Naive thymus-derived CD4-positive, alpha-beta T cell (primary cell): ENCODE measurements at regions of chr4 and their contacts with region 1.

Region 1: DNA sequence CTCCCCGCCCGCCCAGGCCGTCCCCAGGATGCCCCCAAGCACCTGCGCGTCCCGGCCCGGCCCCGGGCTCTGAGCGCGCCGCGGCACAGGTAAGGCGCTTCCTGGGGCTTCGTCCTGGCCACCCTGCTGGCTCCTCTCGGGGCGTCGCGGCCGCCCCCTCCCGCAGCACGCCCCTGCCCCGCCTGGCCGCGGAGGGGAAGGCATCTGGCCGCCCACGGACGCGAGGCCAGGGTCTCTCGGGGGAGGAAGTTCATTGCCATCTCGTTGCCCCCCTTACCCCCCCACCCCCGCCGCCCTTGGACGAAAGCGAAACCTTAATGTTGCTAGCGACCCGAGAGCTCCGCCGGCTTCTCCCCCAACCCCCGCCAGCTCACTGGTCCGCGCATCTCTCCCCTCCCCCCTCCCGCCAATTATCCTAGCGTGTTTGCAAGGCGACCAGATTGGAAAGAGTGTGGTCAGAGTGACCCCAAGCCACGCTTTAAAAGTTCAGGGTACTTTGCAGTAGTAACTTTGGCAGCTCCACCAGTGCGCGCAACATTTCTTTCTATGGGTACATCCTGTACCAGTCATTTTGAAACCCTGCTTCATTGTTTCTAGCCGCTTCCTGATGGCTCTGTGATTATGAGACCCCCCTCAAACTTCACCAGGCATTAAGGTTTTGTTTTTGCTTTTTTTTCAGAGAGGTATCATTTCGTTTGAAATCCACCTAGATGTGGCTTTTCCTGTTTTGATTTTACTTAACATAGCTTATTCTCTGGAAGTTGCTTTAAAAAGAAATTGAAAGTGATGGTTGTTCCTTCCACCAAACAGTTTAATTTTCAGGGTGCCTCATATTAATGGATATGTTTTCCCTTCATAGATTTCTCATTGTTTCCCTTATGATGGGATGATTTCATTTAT is 626 bp downstream of the TBC1D1 start:
- DNase-seq: peak; percentile 37 to 70 (median 58)
- ATAC-seq: peak; percentile 68
- H3K4me3 ChIP-seq: peak overlapping the region; percentile 51
- H3K4me3 Mint-ChIP-seq: peak overlapping the region; percentile 88 to 100 (median 96)
- H3K27ac ChIP-seq: peak overlapping the region; percentile 69
- H3K27ac Mint-ChIP-seq: peak overlapping the region; percentile 86 to 97 (median 92)
- H3K4me1 ChIP-seq: peaks cover 10 to 25% of the 10 kb centered on the region in 2 donors
- H3K4me1 Mint-ChIP-seq: peaks cover 28 to 66% (median 55%) of the 10 kb centered on the region in 7 donors
- H3K27me3 ChIP-seq: no peaks in the 10 kb centered on the region
- H3K27me3 Mint-ChIP-seq: peaks cover 0 to 5% (median 0%) of the 10 kb centered on the region in 5 donors

Region 2: GRCh38 chr4:37603070-37603468 is 288.4 kb before region 1 on chr4:
- CTCF ChIA-PET with region 1: interaction called, 3 read pairs
- POLR2A ChIA-PET with region 1: interaction called, 3 read pairs
- intact Hi-C with region 1: loop called (anchors 2 kb)
- DNase-seq: peak; percentile 38 to 84 (median 64)
- ATAC-seq: peak; percentile 87
- H3K4me3 ChIP-seq: no peak overlapping the region
- H3K4me3 Mint-ChIP-seq: peak overlapping the region in 2 of 10 donors; percentile 3 to 58
- H3K27ac ChIP-seq: no peak overlapping the region
- H3K27ac Mint-ChIP-seq: peak overlapping the region in 5 of 9 donors; percentile 2 to 70 (median 55)
- H3K4me1 ChIP-seq: peaks cover 0 to 3% of the 10 kb centered on the region in 2 donors
- H3K4me1 Mint-ChIP-seq: peaks cover 6 to 33% (median 11%) of the 10 kb centered on the region in 7 donors
- H3K27me3 ChIP-seq: no peaks in the 10 kb centered on the region
- H3K27me3 Mint-ChIP-seq: no peaks in the 10 kb centered on the region

Region 3: GRCh38 chr4:37873386-37873785 is 18.1 kb before region 1 on chr4:
- CTCF ChIA-PET with region 1: no interaction called
- POLR2A ChIA-PET with region 1: interaction called, 3 read pairs
- intact Hi-C with region 1: loop called (anchors 1 to 2 kb)
- DNase-seq: no peak
- ATAC-seq: peak; percentile 41
- H3K4me3 ChIP-seq: no peak overlapping the region
- H3K4me3 Mint-ChIP-seq: no peak overlapping the region
- H3K27ac ChIP-seq: no peak overlapping the region
- H3K27ac Mint-ChIP-seq: peak overlapping the region in 1 of 9 donors; percentile 22
- H3K4me1 ChIP-seq: peaks cover 0 to 5% of the 10 kb centered on the region in 2 donors
- H3K4me1 Mint-ChIP-seq: peaks cover 0 to 25% (median 21%) of the 10 kb centered on the region in 7 donors
- H3K27me3 ChIP-seq: no peaks in the 10 kb centered on the region
- H3K27me3 Mint-ChIP-seq: no peaks in the 10 kb centered on the region

Region 4: DNA sequence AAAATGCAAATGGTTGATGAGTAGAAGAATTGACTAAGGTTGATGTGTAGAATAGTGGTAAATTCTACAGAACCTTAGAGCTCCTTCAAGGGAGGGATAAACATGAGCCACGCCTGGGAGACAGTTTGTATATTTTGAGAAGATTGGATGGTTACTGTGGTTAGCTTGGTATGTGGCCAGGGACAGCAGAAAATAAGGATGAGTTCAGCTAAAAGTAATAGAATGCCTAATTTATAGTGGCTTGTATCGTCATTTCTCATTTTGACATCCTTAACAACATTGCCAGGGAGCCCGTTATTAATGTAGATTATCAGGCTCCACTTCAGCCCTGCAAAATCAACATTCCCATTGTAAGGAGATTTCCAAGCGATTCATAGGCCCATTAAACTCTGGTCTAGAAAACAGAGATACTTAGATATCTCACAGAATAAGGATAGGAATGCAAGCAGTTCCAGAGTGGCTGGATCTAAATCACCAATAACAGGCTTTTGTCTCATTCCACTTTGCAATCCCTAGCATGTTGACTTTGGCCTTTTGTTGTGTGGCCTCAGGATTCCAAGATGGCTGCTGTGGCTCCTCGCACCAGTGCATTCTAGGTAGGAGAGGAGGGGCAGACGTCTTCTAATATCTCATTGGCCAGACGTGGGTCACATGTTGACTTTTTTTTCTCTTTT is 62.2 kb after region 1 on chr4:
- CTCF ChIA-PET with region 1: no interaction called
- POLR2A ChIA-PET with region 1: no interaction called
- intact Hi-C with region 1: loop called in 1 of 2 experiments (anchors 2 kb)
- DNase-seq: no peak
- ATAC-seq: no peak
- H3K4me3 ChIP-seq: no peak overlapping the region
- H3K4me3 Mint-ChIP-seq: no peak overlapping the region
- H3K27ac ChIP-seq: no peak overlapping the region
- H3K27ac Mint-ChIP-seq: peak overlapping the region in 3 of 9 donors; percentile 19 to 74 (median 69)
- H3K4me1 ChIP-seq: no peaks in the 10 kb centered on the region
- H3K4me1 Mint-ChIP-seq: peaks cover 7 to 21% (median 10%) of the 10 kb centered on the region in 7 donors
- H3K27me3 ChIP-seq: no peaks in the 10 kb centered on the region
- H3K27me3 Mint-ChIP-seq: no peaks in the 10 kb centered on the region

Region 5: DNA sequence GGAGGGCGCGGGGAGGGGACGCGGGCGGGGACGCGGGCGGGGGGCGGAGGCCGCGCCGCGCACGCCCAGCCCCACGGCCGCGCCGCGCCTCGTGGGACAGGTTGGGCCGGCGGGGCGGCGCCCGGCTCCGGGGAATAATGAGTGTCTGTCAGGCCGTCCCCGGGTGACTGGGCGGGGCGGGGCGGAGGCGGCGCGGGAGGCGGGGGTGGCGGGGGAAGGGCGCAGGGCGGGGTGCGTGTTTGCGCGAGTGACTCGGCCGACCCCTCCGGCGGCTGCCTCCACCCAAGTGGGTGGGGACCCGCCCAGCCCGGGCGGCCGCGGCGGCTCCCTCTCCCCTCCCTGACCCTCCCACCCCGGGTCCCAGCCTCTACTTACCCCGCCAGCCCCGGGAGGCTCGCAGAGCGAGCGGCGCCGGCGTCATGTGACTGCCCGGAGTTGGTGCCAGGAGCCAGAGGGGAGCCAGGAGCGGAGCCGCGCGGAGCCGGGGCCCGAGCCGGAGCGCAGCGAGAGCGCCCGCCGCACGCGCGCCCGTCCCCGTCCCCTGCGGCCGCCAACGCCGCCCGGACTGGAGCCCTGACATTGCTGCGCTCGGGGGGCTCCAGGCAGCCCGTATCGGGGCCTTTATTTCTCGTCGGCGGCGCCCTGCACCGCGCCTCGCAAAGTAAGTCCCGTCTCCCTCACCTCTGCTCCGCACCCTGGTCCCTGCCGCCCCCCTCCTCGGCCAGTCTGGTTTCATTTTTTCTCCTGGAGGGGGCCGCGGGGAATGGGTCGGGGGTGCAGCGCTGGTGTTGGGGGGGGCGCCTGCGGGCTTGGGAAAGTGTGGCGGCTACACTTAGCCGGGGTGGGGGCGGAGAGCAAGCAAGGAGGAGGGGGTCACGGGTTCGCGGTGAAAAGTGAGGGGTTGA is 772.5 kb after region 1 on chr4 and contains the start of gene KLF3:
- CTCF ChIA-PET with region 1: no interaction called
- POLR2A ChIA-PET with region 1: no interaction called
- intact Hi-C with region 1: loop called in 1 of 2 experiments (anchors 5 kb)
- DNase-seq: peak in 7 of 9 donors; percentile 91 to 95 (median 93)
- ATAC-seq: peak; percentile 86
- H3K4me3 ChIP-seq: peak within 1 kb of the TSS; percentile 64
- H3K4me3 Mint-ChIP-seq: peak within 1 kb of the TSS; percentile 85 to 100 (median 99)
- H3K27ac ChIP-seq: peak within 1 kb of the TSS; percentile 98
- H3K27ac Mint-ChIP-seq: peak within 1 kb of the TSS; percentile 85 to 100 (median 95)
- H3K4me1 ChIP-seq: peaks cover 33 to 50% of the 10 kb centered on the region in 2 donors
- H3K4me1 Mint-ChIP-seq: peaks cover 40 to 57% (median 53%) of the 10 kb centered on the region in 7 donors
- H3K27me3 ChIP-seq: no peaks in the 10 kb centered on the region
- H3K27me3 Mint-ChIP-seq: peaks cover 0 to 63% (median 0%) of the 10 kb centered on the region in 5 donors
- total RNA-seq, gene KLF3: 21.0 to 142 (median 132) TPM